Transverse colon (tissue), 4 donors: ENCODE measurements at regions of chr17 and their contacts with region 1.

Region 1: DNA sequence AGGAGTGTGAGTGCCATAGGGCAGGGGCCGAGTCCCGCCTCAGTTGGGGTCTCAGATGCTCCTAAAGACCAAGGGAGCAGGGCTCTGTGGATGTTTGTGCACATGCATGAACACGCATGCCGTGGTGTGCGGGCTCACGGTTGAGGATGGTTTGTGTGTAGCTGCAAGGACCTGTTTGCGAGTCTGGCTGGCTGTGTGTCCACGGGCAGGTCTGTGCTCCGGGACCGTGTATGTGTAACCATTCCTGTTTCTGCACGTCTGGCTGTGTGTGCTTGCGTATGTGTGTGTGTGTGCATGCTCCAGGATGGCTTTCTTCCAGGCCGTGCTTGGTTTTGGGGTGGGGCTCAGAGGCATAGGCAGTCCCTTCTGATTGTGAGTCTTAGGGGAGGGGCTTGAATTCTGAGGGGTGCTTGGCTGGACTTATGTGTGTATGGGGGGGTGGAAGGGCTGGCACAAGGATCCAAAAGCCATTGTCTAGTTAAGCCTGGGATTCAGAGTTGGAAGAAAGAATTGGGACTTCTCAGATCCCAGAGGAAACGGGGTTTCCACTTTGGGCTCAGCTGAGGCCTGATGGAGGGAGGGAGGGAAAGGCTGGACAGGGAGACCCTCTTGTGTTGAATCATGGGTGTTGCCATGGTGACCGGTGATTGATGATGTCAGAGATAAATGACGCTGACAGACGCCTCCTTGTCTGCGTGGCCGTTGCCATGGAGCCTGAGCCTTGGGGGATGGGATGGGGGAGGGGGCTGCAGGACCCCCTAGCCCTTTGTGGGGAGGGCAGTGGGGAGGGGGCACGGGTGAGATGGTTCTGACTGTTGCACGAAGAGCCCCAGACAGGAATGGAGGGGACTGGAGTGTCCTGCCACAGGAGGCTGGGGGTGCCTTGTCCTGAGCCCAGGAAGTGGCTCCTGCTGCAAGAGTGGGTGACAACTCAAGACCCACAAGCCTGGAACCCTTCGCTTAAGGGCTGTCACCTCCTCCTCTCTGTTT is 14.3 kb downstream of the GJD3 start:
- DNase-seq: no peak
- H3K4me3 ChIP-seq: no peak overlapping the region
- H3K27ac ChIP-seq: peak overlapping the region in 2 of 4 donors; percentile 20 to 95
- H3K4me1 ChIP-seq: peaks cover 45 to 77% (median 50%) of the 10 kb centered on the region in 4 donors
- H3K27me3 ChIP-seq: no peaks in the 10 kb centered on the region
- CTCF ChIP-seq: no peak
- EP300 ChIP-seq: no peak
- POLR2A ChIP-seq: no peak

Region 2: GRCh38 chr17:40253565-40253964 is 96.7 kb before region 1 on chr17:
- in situ Hi-C with region 1: no loop called
- intact Hi-C with region 1: no loop called
- DNase-seq: no peak
- H3K4me3 ChIP-seq: no peak overlapping the region
- H3K27ac ChIP-seq: no peak overlapping the region
- H3K4me1 ChIP-seq: peaks cover 8 to 32% (median 17%) of the 10 kb centered on the region in 4 donors
- H3K27me3 ChIP-seq: no peaks in the 10 kb centered on the region
- CTCF ChIP-seq: no peak
- EP300 ChIP-seq: no peak
- POLR2A ChIP-seq: no peak

Region 3: DNA sequence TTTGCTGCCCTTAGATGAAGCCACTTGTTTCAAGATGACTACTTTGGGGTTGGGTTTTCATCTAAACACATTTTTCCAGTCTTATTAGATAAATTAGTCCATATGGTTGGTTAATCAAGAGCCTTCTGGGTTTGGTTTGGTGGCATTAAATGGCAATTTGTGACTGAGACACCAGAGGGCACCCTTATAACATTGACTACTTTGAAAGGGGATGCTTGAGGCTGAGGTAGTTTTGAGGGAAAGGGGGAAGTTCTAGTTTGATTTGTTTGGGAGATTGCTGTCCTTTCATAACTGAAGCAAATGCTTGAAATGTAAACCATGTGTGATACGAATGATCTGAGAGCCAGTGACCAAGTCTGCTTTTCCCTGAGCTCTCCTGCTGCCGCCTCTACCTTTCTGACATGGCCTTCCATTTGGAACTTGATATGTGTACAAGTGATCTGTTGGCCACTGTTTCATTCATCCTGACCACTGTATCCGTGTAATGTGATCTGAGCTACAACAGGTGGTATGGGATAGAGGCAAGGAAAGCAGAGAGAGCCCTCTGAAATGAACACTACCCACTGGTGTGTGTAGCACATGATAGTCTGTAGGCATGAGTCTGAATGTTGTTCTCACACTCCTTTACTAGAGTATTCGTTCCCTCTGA is 47.1 kb before region 1 on chr17:
- in situ Hi-C with region 1: loop called (anchors 5 kb)
- intact Hi-C with region 1: loop called (anchors 1 kb)
- DNase-seq: peak; percentile 62
- H3K4me3 ChIP-seq: no peak overlapping the region
- H3K27ac ChIP-seq: peak overlapping the region; percentile 59 to 81 (median 74)
- H3K4me1 ChIP-seq: peaks cover 20 to 44% (median 33%) of the 10 kb centered on the region in 4 donors
- H3K27me3 ChIP-seq: no peaks in the 10 kb centered on the region
- CTCF ChIP-seq: peak; percentile 69 to 80 (median 74)
- EP300 ChIP-seq: no peak
- POLR2A ChIP-seq: no peak